Left colon (tissue), 2 donors: ENCODE measurements at regions of chr3 and their contacts with region 1.

Region 1: DNA sequence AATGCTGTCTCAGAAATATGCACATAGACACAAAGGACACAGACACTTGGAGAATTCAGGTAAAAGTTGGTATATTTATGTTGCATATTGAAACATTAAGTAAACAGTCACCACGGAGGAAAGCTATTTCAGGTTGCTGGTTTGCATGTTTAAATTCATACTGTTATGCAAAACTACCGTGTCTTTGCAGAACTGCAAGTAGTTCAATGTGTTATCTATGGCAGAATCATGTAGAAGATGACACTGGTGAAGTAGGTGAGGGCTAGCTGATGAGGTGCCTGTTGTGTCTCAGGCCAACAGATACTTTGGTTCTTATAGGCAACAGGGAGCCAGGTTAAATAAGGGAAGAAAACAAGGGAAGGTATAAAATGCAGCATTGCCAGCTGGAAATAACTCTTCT is 511.3 kb downstream of the DIPK2A start:
- DNase-seq: no peak
- ATAC-seq: no peak

Region 2: GRCh38 chr3:144549161-144549560 is 66.3 kb after region 1 on chr3:
- intact Hi-C with region 1: loop called in 1 of 2 experiments (anchors 10 kb)
- DNase-seq: no peak
- ATAC-seq: no peak